Activated CD4-positive, alpha-beta T cell treated with anti-CD3 and anti-CD28 coated beads, Interleukin-2, amount 10 ng/mL, durations not matched to agents 24 days and 14 days (primary cell): ENCODE measurements at regions of chr5 and their contacts with region 1.

Region 1: GRCh38 chr5:65562731-65563701 is at the starts of genes CENPK and PPWD1:
- DNase-seq: peak; percentile 98
- H3K4me3 Mint-ChIP-seq: peak within 1 kb of the TSS; percentile 91
- H3K27ac Mint-ChIP-seq: peak within 1 kb of the TSS; percentile 96
- H3K4me1 Mint-ChIP-seq: peaks cover 50% of the 10 kb centered on the region
- H3K27me3 Mint-ChIP-seq: no peaks in the 10 kb centered on the region
- total RNA-seq, gene CENPK: 87.8 and 88.8 TPM in 2 replicates
- total RNA-seq, gene PPWD1: 53.9 and 55.6 TPM in 2 replicates

Region 2: DNA sequence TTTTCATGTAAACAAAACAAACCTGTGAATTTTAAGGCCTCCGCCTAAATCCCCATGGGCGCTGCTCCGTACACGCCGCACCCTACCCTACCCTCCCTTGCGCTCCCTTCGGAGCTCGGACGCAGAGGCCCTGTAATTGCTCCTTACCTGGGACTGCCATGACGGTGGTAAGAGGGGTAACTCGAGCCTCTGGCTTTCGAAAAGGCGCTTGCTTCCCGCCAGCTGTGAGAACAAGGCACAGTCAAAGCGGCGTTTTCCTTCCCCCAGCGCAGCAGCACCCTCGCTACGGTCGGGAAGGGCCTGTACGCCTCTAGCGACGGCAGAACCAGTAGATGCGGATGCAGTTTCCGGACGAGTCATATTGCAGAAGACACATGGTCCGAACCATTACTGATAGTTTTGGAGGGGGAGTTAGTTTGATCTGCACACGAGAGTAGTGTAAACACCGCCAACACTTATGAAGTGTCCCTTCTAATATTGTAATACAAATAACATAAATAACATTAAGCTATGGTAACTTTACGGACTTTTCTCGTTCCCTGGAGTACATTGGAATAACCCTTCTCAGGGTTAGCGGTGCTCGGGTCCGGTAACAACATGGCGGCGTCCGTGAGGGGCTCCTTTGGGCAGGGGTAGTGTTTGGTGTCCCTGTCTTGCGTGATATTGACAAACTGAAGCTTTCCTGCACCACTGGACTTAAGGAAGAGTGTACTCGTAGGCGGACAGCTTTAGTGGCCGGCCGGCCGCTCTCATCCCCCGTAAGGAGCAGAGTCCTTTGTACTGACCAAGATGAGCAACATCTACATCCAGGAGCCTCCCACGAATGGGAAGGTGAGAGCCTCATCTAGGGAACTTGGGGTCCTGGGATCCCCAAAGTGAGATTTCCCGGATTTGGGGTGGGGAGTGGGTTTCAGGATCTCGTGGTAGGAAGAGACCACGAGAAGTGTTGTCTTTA is 794.4 kb before region 1 on chr5 and contains the starts of genes CWC27 and SREK1IP1:
- intact Hi-C with region 1: loop called (anchors 2 kb)
- DNase-seq: peak; percentile 95
- H3K4me3 Mint-ChIP-seq: peak within 1 kb of the TSS; percentile 97
- H3K27ac Mint-ChIP-seq: peak within 1 kb of the TSS; percentile 94
- H3K4me1 Mint-ChIP-seq: peaks cover 43% of the 10 kb centered on the region
- H3K27me3 Mint-ChIP-seq: no peaks in the 10 kb centered on the region
- total RNA-seq, gene CWC27: 31.8 and 32.4 TPM in 2 replicates
- total RNA-seq, gene SREK1IP1: 31.1 and 34.8 TPM in 2 replicates

Region 3: DNA sequence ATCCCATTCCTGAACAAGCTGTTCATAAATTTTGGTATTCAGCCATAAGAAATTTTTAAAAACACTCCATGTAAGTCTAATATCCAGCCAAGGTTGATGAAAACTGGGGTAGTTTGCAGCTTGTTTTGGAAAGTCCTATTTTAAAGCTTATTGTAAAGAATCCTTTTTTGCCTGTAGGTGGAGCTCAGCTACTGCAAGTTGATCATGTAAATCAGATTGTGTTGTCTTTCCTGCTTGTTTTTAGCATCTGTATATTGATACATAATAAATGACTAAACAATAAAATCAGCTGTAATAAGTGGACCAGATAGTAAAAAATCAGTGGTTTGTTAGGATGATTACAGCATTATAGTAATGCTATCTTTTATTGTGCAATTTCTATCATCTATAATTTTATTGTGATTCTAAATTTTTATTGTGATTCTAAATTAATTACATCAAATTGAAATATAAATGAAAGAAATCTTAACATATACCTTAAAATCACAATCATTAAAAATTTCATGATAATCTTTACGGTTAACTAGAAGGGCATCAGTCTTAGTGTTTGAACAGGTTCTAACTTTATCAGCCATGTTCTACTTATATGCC is 751.9 kb before region 1 on chr5:
- intact Hi-C with region 1: loop called (anchors 5 kb)
- DNase-seq: peak; percentile 73
- H3K4me3 Mint-ChIP-seq: no peak overlapping the region
- H3K27ac Mint-ChIP-seq: no peak overlapping the region
- H3K4me1 Mint-ChIP-seq: peaks cover 1% of the 10 kb centered on the region
- H3K27me3 Mint-ChIP-seq: no peaks in the 10 kb centered on the region

Region 4: GRCh38 chr5:65451436-65451835 is 111.6 kb before region 1 on chr5:
- intact Hi-C with region 1: no loop called
- DNase-seq: no peak
- H3K4me3 Mint-ChIP-seq: no peak overlapping the region
- H3K27ac Mint-ChIP-seq: no peak overlapping the region
- H3K4me1 Mint-ChIP-seq: no peaks in the 10 kb centered on the region
- H3K27me3 Mint-ChIP-seq: peaks cover 2% of the 10 kb centered on the region

Region 5: DNA sequence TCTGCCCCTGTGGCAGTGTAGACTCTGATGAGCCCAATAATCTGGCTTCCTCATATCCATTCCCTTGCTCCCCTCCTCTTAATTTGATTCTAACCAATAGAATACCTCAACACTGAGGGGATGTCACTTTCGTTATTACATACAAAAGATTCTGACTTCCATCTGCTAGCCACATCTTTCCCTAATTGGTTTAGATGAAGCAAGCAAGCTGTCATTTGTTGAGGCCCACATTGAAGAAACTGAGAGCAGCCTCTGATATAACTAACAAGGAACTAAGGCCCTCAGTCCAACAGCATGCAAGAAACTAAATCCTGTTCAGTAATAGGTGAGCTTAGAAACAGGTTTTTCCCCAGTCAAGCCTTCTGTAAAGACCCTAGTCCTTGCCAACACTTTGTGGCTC is 87.1 kb before region 1 on chr5:
- intact Hi-C with region 1: no loop called
- DNase-seq: no peak
- H3K4me3 Mint-ChIP-seq: no peak overlapping the region
- H3K27ac Mint-ChIP-seq: no peak overlapping the region
- H3K4me1 Mint-ChIP-seq: no peaks in the 10 kb centered on the region
- H3K27me3 Mint-ChIP-seq: peaks cover 11% of the 10 kb centered on the region

Region 6: GRCh38 chr5:65588694-65589093 is 25.7 kb after region 1 on chr5:
- intact Hi-C with region 1: no loop called
- DNase-seq: no peak
- H3K4me3 Mint-ChIP-seq: no peak overlapping the region
- H3K27ac Mint-ChIP-seq: no peak overlapping the region
- H3K4me1 Mint-ChIP-seq: no peaks in the 10 kb centered on the region
- H3K27me3 Mint-ChIP-seq: no peaks in the 10 kb centered on the region

Region 7: GRCh38 chr5:65624571-65625555 is 61.8 kb after region 1 on chr5 and contains the starts of genes SHLD3 and TRAPPC13:
- intact Hi-C with region 1: loop called (anchors 1 kb)
- DNase-seq: peak; percentile 95
- H3K4me3 Mint-ChIP-seq: peak within 1 kb of the TSS; percentile 91
- H3K27ac Mint-ChIP-seq: peak within 1 kb of the TSS; percentile 99
- H3K4me1 Mint-ChIP-seq: peaks cover 28% of the 10 kb centered on the region
- H3K27me3 Mint-ChIP-seq: no peaks in the 10 kb centered on the region
- total RNA-seq, gene SHLD3: 4.7 and 5.1 TPM in 2 replicates
- total RNA-seq, gene TRAPPC13: 22.4 and 27.2 TPM in 2 replicates

Region 8: DNA sequence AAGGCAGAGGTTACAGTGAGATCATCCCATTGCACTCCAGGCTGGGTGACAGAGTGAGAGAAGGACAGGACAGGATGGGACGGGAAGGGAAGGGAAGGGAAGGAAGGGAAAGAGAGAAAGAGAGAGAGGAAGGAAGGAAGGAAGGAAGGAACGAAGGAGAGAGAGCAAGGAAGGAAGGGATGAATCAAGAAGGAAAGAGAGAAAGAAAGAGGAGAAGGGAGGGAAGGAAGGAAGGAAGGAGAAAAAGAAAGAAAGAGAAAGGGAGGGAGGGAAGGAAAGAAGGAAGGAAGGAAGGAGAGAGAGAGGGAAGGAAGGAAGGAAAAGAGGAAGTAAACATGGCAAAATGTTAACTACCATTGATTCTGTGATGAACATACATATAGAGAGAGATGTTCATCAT is 130.1 kb after region 1 on chr5:
- intact Hi-C with region 1: no loop called
- DNase-seq: no peak
- H3K4me3 Mint-ChIP-seq: no peak overlapping the region
- H3K27ac Mint-ChIP-seq: no peak overlapping the region
- H3K4me1 Mint-ChIP-seq: no peaks in the 10 kb centered on the region
- H3K27me3 Mint-ChIP-seq: no peaks in the 10 kb centered on the region

Region 9: DNA sequence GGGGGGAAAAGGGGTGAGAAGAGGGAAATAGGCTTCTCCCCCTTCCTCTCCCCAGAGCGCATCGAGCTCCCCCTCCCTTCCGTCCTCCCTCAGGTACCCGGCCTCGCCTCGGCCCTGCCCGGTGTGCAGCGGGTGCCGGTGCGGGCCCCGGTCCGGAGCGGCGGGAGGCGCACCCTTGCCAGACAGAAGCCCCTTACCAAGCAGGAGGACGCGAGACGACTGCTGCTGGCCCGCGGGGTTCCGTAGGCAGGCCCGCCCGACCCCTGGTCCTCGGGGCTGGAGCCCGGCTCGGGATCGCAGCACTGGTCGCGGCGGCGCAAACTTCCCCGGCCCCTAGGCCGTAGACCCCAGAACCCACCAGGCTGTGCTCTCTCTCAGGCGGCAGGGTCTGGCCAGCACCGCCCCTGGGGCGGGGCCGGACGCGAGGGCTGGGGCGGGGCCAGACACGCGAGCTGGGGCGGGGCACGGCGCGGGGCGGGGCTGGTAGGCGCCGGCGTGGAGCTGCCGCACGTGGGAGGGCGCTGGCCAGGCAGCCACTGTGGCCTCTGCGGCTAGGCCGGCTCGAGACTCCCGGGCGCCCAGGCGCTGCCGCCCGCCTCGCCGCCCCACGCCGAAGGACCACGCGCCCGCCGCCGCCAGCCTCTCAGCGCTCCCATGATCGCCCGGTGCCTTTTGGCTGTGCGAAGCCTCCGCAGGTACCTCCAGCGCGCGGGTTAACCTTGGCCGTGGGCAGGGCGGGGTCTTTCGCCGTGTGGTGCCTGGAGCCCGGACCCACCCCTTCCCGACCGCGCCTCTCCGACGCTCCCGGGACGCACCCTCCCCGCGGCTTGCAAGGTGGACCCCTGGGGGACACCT is 158.9 kb after region 1 on chr5 and contains the starts of genes NLN and SGTB:
- intact Hi-C with region 1: loop called (anchors 2 kb)
- DNase-seq: peak; percentile 96
- H3K4me3 Mint-ChIP-seq: peak within 1 kb of the TSS; percentile 95
- H3K27ac Mint-ChIP-seq: peak within 1 kb of the TSS; percentile 96
- H3K4me1 Mint-ChIP-seq: peaks cover 31% of the 10 kb centered on the region
- H3K27me3 Mint-ChIP-seq: no peaks in the 10 kb centered on the region
- total RNA-seq, gene NLN: 28.0 and 30.7 TPM in 2 replicates
- total RNA-seq, gene SGTB: 10.0 and 10.3 TPM in 2 replicates